ENCODE measurements at regions of chr9 and their contacts with region 1.

Region 1: DNA sequence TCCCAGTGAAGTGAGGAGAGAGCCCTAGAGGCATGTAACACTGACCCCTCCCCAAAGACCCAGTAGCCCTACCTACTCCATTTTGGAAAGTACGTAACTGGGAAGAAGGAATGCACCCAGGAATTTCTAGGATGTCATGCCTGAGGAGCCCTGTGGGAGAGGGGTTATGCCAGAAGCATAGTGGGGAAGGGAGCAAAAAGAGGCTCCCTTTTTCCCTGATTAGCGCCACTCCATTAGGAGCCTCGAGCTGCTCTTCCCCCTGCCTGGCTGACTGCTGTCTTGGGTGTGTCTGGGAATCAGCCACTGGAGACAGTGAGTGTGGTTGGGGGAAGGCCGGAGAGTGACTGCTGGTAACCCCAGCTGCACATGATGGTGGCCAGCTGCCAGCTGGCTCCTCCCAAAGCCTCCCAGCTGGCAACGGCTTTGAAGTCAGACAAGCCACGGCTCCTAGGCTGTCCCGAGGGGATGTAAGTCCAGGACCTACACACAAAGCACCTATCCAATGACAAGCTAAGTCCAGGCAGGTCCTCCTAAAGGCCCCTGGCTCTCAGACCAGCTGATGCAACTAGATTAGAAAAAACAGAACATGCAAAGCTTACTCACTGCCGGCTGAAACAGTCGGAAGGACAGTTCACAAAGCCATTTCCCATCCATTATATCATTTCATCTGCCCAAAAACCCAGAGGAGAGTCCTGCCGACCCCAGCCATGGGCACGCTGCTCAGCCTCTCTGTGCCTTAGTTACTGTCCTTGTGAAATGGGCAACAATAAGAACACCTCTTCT is 136.6 kb upstream of the ABCA1 start:
- DNase-seq: peak; percentile 77
- ATAC-seq: peak; percentile 94
- H3K4me3 ChIP-seq: no peak overlapping the region
- H3K27ac ChIP-seq: peak overlapping the region; percentile 91
- H3K4me1 ChIP-seq: peaks cover 26% of the 10 kb centered on the region
- H3K27me3 ChIP-seq: no peaks in the 10 kb centered on the region
- CTCF ChIP-seq: no peak

Region 2: DNA sequence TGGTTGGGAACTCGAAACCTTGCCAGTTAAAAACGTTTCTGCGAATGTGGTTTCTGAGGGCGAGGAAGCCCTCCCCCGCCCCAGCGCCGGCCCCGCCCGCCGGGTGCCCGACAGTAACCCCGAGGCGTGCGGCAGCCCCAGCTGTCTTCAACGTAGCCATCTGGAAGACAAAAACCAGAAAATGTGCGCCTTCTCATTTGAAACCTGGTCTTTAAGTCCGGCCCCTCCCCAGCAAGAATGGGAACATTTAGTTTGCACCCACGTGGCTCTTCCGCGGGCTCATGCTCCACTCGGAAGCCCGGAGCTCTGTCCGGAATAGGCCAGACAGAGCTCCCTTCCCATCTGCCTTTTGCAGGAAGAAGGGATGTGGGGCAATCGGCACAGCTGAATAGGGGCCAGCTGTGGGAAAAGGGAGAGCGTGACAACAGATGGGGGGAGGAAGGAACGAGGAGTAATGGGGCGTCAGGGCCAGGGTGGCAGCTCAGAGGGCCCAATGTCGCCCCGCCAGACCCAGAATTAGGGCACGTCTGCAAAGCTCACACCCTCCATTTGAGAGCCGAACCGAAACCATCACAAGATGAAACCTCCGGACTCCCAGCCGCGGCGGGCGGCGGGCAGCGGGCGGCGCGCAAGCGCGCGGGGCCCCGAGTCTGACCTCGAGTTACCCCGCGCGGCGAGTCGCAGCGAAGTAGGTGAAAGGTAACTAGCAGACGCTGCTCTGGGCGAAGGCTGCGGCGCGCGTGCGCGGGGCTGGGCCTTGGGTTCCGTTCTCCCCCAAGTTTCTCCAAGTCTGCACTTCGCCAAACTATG is 73.2 kb before region 1 on chr9:
- CTCF ChIA-PET with region 1: no interaction called
- POLR2A ChIA-PET with region 1: no interaction called
- intact Hi-C with region 1: loop called (anchors 2 kb)
- DNase-seq: peak; percentile 68
- ATAC-seq: peak; percentile 80
- H3K4me3 ChIP-seq: peak overlapping the region; percentile 88
- H3K27ac ChIP-seq: peak overlapping the region; percentile 90
- H3K4me1 ChIP-seq: peaks cover 17% of the 10 kb centered on the region
- H3K27me3 ChIP-seq: no peaks in the 10 kb centered on the region
- CTCF ChIP-seq: no peak